Sigmoid colon (tissue), 7 donors: ENCODE measurements at regions of chr1 and their contacts with region 1.

Region 1: GRCh38 chr1:211654838-211655787 is 20.3 kb downstream of the NEK2 start:
- DNase-seq: peak; percentile 94
- H3K4me3 ChIP-seq: peak overlapping the region in 1 of 4 donors; percentile 4
- H3K27ac ChIP-seq: no peak overlapping the region
- H3K4me1 ChIP-seq: peaks cover 0 to 4% (median 0%) of the 10 kb centered on the region in 4 donors
- H3K27me3 ChIP-seq: no peaks in the 10 kb centered on the region
- CTCF ChIP-seq: peak; percentile 87 to 92 (median 88)
- EP300 ChIP-seq: no peak
- POLR2A ChIP-seq: no peak

Region 2: GRCh38 chr1:211469938-211470529 is 185.1 kb before region 1 on chr1:
- intact Hi-C with region 1: loop called (anchors 1 kb)
- DNase-seq: peak; percentile 89
- H3K4me3 ChIP-seq: no peak overlapping the region
- H3K27ac ChIP-seq: no peak overlapping the region
- H3K4me1 ChIP-seq: peaks cover 0 to 19% (median 16%) of the 10 kb centered on the region in 4 donors
- H3K27me3 ChIP-seq: peaks cover 0 to 13% (median 5%) of the 10 kb centered on the region in 3 donors
- CTCF ChIP-seq: peak; percentile 50 to 84 (median 70)
- EP300 ChIP-seq: no peak
- POLR2A ChIP-seq: no peak